CD8-positive, alpha-beta T cell (primary cell): ENCODE measurements at regions of chr15 and their contacts with region 1.

Region 1: DNA sequence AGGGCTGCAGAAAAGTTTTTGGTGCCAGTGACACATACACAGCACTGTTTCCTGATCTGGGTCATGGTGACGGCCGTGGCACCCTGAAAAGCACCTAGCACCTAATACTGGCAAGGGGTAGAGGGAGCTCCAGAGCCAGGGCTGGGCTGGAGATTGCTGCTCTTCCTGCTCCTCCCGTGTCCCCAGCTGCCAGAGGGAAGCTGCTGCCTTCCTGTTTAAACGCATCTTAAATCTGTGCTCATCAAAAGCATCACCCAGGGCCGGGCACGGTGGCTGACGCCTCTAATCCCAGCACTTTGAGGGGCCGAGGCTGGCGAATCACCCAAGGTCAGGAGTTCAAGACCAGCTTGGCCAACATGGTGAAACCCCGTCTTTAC is 156.7 kb upstream of the MEF2A start:
- DNase-seq: peak in 5 of 9 experiments; percentile 22 to 65 (median 50)
- ATAC-seq: peak; percentile 77
- H3K4me3 ChIP-seq: no peak overlapping the region
- H3K4me3 Mint-ChIP-seq: no peak overlapping the region
- H3K27ac ChIP-seq: no peak overlapping the region
- H3K27ac Mint-ChIP-seq: no peak overlapping the region
- H3K4me1 ChIP-seq: peaks cover 20% of the 10 kb centered on the region
- H3K4me1 Mint-ChIP-seq: peaks cover 24% of the 10 kb centered on the region
- H3K27me3 ChIP-seq: no peaks in the 10 kb centered on the region
- H3K27me3 Mint-ChIP-seq: no peaks in the 10 kb centered on the region
- CTCF ChIP-seq: peak; percentile 25

Region 2: GRCh38 chr15:99239545-99240198 is 169.4 kb before region 1 on chr15:
- CTCF ChIA-PET with region 1: no interaction called
- POLR2A ChIA-PET with region 1: no interaction called
- intact Hi-C with region 1: no loop called
- DNase-seq: peak in 2 of 9 experiments; percentile 30 to 55
- ATAC-seq: no peak
- H3K4me3 ChIP-seq: no peak overlapping the region
- H3K4me3 Mint-ChIP-seq: no peak overlapping the region
- H3K27ac ChIP-seq: no peak overlapping the region
- H3K27ac Mint-ChIP-seq: no peak overlapping the region
- H3K4me1 ChIP-seq: no peaks in the 10 kb centered on the region
- H3K4me1 Mint-ChIP-seq: no peaks in the 10 kb centered on the region
- H3K27me3 ChIP-seq: no peaks in the 10 kb centered on the region
- H3K27me3 Mint-ChIP-seq: peaks cover 15% of the 10 kb centered on the region
- CTCF ChIP-seq: no peak

Region 3: DNA sequence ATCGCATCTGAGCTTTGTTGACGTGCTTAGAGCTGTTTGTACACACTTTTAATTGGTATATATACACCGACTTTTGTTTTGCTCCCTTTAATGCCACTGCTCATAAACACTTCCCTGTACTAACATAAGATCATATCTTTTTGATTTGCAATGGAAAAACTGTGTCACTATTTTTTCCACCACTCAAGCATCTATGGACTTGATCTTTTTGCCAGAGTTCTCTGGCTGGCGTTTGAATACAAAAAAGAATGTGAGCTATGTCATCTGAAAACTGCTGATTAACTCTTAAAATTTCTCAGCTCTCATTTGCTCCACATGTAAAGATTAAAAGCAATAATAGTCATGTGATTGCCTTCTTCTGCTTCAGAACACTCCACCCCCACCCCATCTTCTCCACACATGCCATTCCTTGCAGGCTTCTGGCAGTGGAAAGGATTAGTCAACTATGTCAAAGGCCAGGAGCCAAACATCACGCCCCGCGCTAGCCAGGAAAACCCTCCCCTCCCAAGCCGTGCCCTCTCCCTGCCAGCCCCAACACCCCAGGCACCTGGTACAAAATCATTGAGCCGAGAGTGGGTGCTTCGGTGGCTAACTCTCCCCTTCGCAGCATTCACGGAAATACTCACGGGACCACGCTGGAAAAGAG is 33.3 kb after region 1 on chr15:
- CTCF ChIA-PET with region 1: interaction called, 9 read pairs
- POLR2A ChIA-PET with region 1: interaction called, 3 read pairs
- intact Hi-C with region 1: loop called in 1 of 2 experiments (anchors 5 kb)
- DNase-seq: peak in 3 of 9 experiments; percentile 1 to 9 (median 4)
- ATAC-seq: no peak
- H3K4me3 ChIP-seq: no peak overlapping the region
- H3K4me3 Mint-ChIP-seq: no peak overlapping the region
- H3K27ac ChIP-seq: no peak overlapping the region
- H3K27ac Mint-ChIP-seq: peak overlapping the region; percentile 84
- H3K4me1 ChIP-seq: peaks cover 84% of the 10 kb centered on the region
- H3K4me1 Mint-ChIP-seq: peaks cover 69% of the 10 kb centered on the region
- H3K27me3 ChIP-seq: no peaks in the 10 kb centered on the region
- H3K27me3 Mint-ChIP-seq: no peaks in the 10 kb centered on the region
- CTCF ChIP-seq: no peak

Region 4: DNA sequence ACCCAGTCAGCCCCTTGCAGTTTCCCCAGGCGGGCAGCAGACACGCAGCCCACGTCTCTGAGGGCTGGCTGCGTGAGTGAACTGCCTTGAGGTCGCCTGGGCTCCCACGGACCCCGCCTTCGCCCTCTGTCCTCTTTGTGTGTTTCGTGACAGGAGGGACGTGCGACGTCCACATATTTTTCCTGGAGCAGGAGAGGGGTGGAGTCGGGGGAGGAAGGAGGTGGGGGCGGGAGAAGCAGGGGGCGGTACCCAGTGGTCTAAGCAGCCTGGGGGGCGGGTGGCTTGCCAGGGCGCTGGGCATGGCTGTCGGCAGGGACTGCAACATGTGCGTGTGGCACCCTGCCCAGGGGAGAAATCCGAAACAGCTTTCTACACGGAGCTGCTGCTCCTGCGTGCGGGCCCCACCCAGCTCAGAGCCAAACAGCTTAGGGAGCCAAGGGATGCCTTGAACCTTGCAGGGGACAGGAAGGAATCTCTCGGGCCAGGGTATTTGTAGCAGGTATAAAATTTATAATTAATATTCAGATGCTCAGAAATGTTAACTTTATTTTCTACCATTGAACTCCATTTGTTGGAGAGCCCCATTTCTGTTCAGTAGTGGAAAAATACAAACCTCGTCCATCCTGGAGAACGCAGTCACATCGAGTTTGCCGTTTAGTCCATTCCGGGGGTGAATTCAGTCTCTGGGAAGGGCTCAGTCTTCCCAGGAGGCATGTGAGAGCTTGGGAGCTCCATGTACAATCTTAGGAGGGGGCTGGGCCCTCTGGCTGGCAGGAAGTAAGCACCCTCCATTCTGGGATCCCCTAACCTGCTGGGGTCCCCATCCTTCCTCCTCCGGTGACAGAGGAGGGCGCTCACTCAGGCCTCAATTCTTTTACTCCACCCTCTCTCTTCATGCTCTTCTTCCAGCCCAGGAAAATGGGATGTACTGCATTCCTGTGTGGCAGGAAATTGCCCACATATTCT is 77.6 kb after region 1 on chr15:
- CTCF ChIA-PET with region 1: interaction called, 3 read pairs
- POLR2A ChIA-PET with region 1: no interaction called
- intact Hi-C with region 1: loop called in 1 of 2 experiments (anchors 5 kb)
- DNase-seq: peak in 3 of 9 experiments; percentile 15 to 34 (median 17)
- ATAC-seq: peak; percentile 42
- H3K4me3 ChIP-seq: peak overlapping the region; percentile 18 to 37
- H3K4me3 Mint-ChIP-seq: peak overlapping the region; percentile 82
- H3K27ac ChIP-seq: no peak overlapping the region
- H3K27ac Mint-ChIP-seq: peak overlapping the region; percentile 38
- H3K4me1 ChIP-seq: peaks cover 23% of the 10 kb centered on the region
- H3K4me1 Mint-ChIP-seq: peaks cover 23% of the 10 kb centered on the region
- H3K27me3 ChIP-seq: no peaks in the 10 kb centered on the region
- H3K27me3 Mint-ChIP-seq: no peaks in the 10 kb centered on the region
- CTCF ChIP-seq: no peak